ENCODE measurements at regions of chr6 and their contacts with region 1.

Region 1: DNA sequence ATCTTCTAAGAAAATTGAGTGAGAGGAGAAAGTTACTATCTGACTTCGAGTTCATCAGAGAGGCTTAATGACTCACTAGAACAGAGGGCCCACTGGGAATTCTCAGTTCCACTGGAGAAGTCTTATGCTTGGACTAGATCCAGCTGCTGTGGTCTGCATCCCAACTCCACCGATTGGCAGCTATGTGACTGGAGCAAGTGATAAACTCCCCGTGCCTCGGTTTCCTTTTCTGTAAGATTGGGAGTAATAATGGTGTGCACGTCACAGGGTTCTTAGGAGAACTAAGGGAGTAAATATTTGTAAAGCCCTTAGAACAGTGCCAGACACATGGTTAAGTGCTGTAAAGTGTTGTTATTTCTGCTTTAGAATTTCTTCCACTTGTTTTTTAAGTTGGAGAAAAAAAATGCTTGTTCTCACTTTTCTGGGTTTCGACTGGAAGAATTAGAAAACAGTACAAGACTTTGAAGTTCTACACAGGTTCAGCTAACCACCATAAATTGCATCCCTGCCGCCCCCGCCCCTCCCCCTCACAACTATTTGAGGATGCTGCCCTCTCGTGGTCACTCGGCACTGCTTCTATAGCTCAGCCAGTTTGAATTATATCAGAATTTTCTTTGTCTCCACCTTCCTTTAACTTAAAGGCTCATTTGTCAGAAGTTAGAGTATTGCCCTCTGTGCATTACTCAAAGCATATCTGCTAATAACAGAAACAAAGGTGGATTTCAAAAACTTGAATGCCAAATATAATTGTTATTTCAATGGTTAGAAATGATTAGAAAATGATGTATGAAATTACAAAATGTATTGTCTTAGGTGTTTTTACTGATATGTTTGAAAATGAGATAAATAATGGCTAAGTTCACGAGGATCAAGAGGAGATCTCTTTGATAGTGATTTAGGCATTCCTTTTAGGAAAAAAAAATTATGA is 95.0 kb upstream of the IFNGR1 start:
- DNase-seq: peak; percentile 62
- H3K4me3 ChIP-seq: no peak overlapping the region
- H3K27ac ChIP-seq: no peak overlapping the region
- H3K4me1 ChIP-seq: peaks cover 4% of the 10 kb centered on the region
- H3K27me3 ChIP-seq: peaks cover 0 to 12% of the 10 kb centered on the region in 2 experiments
- CTCF ChIP-seq: peak; percentile 73 to 86
- POLR2A ChIP-seq: no peak

Region 2: DNA sequence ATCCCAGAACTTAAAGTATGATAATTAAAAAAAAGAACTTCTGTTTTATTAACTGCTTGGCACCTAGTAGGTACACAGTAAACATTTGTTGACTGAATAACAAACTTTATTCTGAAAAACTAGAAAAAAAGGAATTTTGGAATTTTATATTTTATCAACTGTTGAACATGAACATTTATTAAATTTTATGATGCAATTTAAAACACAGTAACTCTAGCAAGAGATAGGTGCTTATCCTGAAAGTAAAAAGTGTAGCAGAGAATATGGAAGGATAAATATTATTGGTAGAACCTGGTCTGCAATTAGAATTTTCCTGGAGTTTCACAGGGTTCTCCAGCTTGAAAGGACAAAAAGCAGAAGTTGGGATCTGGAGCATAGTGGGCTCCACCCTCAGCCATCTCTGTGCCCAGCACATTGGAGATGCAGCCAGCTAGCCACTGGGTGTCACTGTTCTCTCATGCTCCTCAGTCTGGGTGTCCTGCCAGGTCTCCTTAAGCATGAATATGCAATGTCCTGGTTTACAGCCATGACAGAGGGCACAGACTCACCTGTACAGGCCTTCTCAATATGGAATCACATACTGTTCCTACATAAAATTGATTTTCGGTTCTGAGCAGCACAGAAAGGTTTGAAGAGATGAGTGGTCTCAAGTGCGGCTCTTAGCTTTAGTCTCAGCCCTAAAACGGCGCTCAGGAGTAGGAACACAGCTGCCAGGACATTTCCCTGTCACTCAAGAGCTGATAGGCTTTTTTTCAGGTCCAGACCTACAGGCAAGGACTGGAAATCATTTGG is 237.7 kb before region 1 on chr6:
- CTCF ChIA-PET with region 1: interaction called, 19 read pairs
- POLR2A ChIA-PET with region 1: no interaction called
- dilution Hi-C with region 1: no loop called
- intact Hi-C with region 1: loop called (anchors 1 kb)
- DNase-seq: peak; percentile 60
- H3K4me3 ChIP-seq: no peak overlapping the region
- H3K27ac ChIP-seq: no peak overlapping the region
- H3K4me1 ChIP-seq: no peaks in the 10 kb centered on the region
- H3K27me3 ChIP-seq: peaks cover 2% of the 10 kb centered on the region in 2 experiments
- CTCF ChIP-seq: peak; percentile 67 to 76
- POLR2A ChIP-seq: no peak

Region 3: DNA sequence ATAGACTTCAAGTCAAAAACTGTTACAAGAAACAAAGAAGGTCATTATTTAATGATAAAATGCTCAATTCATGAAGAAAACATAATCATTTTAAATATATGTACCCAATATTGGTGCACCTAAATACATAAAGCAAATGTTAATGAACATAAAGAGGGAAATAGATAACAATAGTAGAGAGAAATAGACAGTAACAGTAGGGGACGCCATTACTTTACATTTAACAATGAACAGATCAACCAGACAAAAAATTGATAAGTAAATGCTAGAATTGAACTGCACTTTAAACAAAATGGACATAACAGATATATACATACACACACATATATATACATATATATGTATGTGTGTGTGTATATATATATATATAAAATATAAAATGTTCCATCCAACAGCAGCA is 178.1 kb before region 1 on chr6:
- CTCF ChIA-PET with region 1: interaction called, 30 read pairs
- POLR2A ChIA-PET with region 1: no interaction called
- dilution Hi-C with region 1: no loop called
- intact Hi-C with region 1: loop called (anchors 1 kb)
- DNase-seq: peak; percentile 48
- H3K4me3 ChIP-seq: no peak overlapping the region
- H3K27ac ChIP-seq: no peak overlapping the region
- H3K4me1 ChIP-seq: no peaks in the 10 kb centered on the region
- H3K27me3 ChIP-seq: peaks cover 0 to 3% of the 10 kb centered on the region in 2 experiments
- CTCF ChIP-seq: peak in 1 of 2 donors; percentile 16
- POLR2A ChIP-seq: no peak

Region 4: DNA sequence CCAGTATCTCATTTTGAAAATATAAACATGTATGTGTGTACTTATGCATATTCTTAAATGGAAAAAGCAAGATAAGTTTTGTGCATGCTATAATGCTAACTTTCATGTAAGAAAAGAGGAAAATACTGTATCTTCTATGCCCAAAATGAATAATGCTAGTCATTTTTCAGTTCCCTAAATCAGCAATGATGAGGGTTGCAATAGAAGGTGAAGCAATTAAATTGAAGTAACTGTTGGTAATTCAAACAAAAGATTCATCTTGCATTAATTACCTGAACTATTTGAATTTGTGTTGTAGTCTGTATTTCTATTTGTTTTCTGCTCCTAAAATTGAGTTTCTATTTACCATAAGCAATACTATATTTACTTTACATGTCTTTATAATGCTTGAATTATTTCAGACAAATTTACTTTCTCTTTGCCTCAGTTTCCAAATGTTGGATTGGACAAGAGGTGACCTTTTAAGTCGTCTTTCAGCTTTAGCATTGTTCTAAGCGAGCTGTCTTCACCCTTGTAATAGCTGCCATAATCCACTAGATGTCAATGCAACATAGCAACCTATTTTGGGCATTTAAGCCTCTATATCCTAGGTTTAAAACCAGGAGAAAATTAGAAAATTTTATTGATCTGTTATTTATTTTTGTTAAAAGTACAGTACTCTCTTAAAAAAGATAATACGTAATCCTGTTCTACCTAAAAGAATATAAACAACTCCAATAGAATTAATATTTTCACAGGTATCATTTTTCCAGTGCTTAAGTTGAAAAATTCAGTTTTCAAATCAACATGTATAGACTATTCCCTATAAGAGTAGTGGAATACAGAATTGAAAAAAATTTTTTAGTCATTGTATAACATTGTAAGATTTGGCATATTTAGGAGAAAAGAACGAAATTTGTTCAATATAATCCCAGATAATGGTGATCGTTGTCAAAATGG is 42.7 kb before region 1 on chr6:
- CTCF ChIA-PET with region 1: interaction called, 122 read pairs
- POLR2A ChIA-PET with region 1: interaction called, 3 read pairs
- dilution Hi-C with region 1: no loop called
- intact Hi-C with region 1: loop called (anchors 1 kb)
- DNase-seq: peak; percentile 72
- H3K4me3 ChIP-seq: no peak overlapping the region
- H3K27ac ChIP-seq: no peak overlapping the region
- H3K4me1 ChIP-seq: no peaks in the 10 kb centered on the region
- H3K27me3 ChIP-seq: peaks cover 3 to 8% of the 10 kb centered on the region in 2 experiments
- CTCF ChIP-seq: peak; percentile 57 to 69
- POLR2A ChIP-seq: no peak

Region 5: DNA sequence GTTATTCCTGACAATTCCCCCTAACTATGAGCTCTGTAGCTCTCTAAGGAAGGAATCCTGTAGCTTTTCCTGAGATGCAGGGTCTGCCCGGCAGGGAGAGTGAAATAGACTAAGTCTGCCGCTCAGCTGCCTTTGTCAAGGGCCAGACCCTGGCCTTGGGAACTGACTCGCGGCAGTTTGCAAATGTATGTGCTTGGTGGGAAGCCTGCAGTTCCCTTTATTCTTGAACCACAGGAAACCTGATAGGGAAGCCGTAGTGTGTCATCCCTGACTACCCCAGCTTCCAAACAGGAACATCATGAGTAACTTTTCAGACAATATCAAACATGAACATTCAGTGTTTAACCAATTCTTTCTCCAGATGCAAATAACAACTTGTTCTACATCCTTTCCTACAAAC is 16.3 kb before region 1 on chr6:
- CTCF ChIA-PET with region 1: interaction called, 27 read pairs
- POLR2A ChIA-PET with region 1: no interaction called
- dilution Hi-C with region 1: no loop called
- intact Hi-C with region 1: no loop called
- DNase-seq: peak; percentile 82
- H3K4me3 ChIP-seq: no peak overlapping the region
- H3K27ac ChIP-seq: peak overlapping the region; percentile 58
- H3K4me1 ChIP-seq: peaks cover 11% of the 10 kb centered on the region
- H3K27me3 ChIP-seq: no peaks in the 10 kb centered on the region
- CTCF ChIP-seq: no peak
- POLR2A ChIP-seq: no peak

Region 6: GRCh38 chr6:137641474-137642077 is 327.4 kb after region 1 on chr6:
- CTCF ChIA-PET with region 1: interaction called, 9 read pairs
- POLR2A ChIA-PET with region 1: no interaction called
- dilution Hi-C with region 1: no loop called
- intact Hi-C with region 1: loop called (anchors 2 kb)
- DNase-seq: peak; percentile 70
- H3K4me3 ChIP-seq: no peak overlapping the region
- H3K27ac ChIP-seq: no peak overlapping the region
- H3K4me1 ChIP-seq: no peaks in the 10 kb centered on the region
- H3K27me3 ChIP-seq: peaks cover 0 to 3% of the 10 kb centered on the region in 2 experiments
- CTCF ChIP-seq: peak; percentile 55 to 58
- POLR2A ChIP-seq: no peak

Measured in endothelial cell of umbilical vein (primary cell).